ENCODE measurements at regions of chr6 and their contacts with region 1.

Region 1: GRCh38 chr6:30396833-30397479 is 52.0 kb downstream of the RPP21 start:
- DNase-seq: peak; percentile 83 to 89
- ATAC-seq: peak; percentile 92 to 100 (median 100)
- H3K4me3 ChIP-seq: no peak overlapping the region
- H3K4me3 Mint-ChIP-seq: no peak overlapping the region
- H3K27ac ChIP-seq: no peak overlapping the region
- H3K27ac Mint-ChIP-seq: no peak overlapping the region
- H3K4me1 ChIP-seq: peaks cover 7% of the 10 kb centered on the region
- H3K4me1 Mint-ChIP-seq: peaks cover 4 to 5% of the 10 kb centered on the region in 2 donors
- H3K27me3 ChIP-seq: peaks cover 11% of the 10 kb centered on the region
- H3K27me3 Mint-ChIP-seq: peaks cover 26 to 60% of the 10 kb centered on the region in 2 donors
- CTCF ChIP-seq: peak; percentile 85

Region 2: DNA sequence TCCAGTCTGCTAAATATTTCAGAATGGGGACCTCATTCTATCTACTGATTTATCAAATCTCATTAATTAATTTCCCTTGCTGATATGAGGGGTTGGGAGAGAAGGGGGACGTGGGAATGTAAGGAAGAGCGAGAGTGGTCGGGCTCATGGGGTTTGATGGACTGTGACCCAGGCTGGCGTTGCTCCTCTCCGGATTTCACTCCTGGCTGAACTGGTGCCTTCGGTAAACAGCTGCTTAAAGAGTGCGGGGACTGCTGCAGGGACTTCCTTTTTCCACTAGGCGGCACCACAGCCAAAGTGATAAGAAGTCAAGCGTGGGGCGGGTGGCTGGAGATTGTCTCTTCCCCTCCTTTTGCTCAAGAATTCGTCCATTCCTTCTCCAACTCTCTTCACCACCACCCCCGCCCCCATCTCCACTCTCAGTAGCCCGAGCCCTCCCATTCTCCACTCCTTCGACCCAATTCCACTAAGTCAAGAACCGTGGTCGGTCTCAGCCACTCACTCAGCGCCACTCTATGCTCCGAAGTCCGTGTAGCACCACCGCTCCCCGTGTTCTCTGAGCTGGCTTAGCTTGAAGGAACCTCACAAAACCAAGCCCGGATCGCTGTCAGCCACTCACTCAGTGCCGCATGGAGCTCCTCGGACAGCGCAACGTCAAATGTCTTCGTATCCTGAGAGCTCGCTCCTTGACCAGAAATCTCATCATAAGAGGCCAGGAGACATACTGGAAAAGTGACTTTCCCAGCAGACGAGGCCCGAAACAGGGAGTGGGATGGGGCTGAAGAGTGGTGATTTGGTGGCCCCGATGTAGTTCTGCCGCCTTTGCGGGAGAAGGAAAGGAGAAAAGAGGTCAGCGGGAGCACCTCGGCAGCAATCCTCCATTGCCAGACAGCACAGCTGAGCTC is 293.7 kb before region 1 on chr6:
- intact Hi-C with region 1: loop called (anchors 5 kb)
- DNase-seq: peak; percentile 72 to 92
- ATAC-seq: peak; percentile 89
- H3K4me3 ChIP-seq: peak overlapping the region; percentile 37
- H3K4me3 Mint-ChIP-seq: peak overlapping the region; percentile 73
- H3K27ac ChIP-seq: peak overlapping the region; percentile 11
- H3K27ac Mint-ChIP-seq: peak overlapping the region; percentile 71 to 80
- H3K4me1 ChIP-seq: peaks cover 38% of the 10 kb centered on the region
- H3K4me1 Mint-ChIP-seq: peaks cover 34 to 37% of the 10 kb centered on the region in 2 donors
- H3K27me3 ChIP-seq: peaks cover 34% of the 10 kb centered on the region
- H3K27me3 Mint-ChIP-seq: peaks cover 44 to 54% of the 10 kb centered on the region in 2 donors
- CTCF ChIP-seq: peak; percentile 84

Region 3: GRCh38 chr6:30219244-30219643 is 177.7 kb before region 1 on chr6:
- intact Hi-C with region 1: loop called (anchors 1 kb)
- DNase-seq: peak in 1 of 2 donors; percentile 81
- ATAC-seq: peak; percentile 68 to 72 (median 68)
- H3K4me3 ChIP-seq: no peak overlapping the region
- H3K4me3 Mint-ChIP-seq: no peak overlapping the region
- H3K27ac ChIP-seq: no peak overlapping the region
- H3K27ac Mint-ChIP-seq: no peak overlapping the region
- H3K4me1 ChIP-seq: peaks cover 10% of the 10 kb centered on the region
- H3K4me1 Mint-ChIP-seq: peaks cover 7 to 21% of the 10 kb centered on the region in 2 donors
- H3K27me3 ChIP-seq: no peaks in the 10 kb centered on the region
- H3K27me3 Mint-ChIP-seq: no peaks in the 10 kb centered on the region
- CTCF ChIP-seq: peak; percentile 72

Region 4: DNA sequence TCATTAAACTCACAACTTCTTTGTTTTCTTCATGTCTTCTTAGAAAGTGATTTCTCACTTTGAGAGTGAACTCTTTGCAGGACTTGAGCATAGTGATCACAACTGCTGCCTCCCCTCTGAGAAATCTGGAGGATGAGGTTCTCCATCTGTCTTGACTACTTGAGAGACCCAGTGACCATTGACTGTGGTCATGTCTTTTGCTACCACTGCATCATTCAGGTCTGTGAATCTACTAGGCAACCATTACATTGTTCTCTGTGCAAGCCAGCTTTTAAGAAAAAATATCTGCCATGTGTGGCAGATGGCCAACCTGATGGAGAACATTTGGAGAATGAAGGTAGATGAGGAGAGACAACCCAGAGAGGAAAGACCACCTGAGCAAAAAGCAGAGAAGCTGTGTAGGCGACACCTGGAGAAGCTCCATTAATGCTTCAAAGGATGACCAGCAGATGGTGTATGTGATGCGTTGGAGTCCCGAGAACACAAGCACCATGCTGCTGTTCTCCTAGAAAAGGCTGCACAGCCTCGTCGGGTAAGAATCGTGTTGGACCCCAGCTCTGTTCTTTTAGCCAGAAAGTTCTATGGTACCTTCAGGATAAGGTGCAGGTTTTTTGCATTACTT is 158.7 kb before region 1 on chr6:
- intact Hi-C with region 1: loop called (anchors 1 kb)
- DNase-seq: peak in 1 of 2 donors; percentile 69
- ATAC-seq: peak; percentile 43 to 64 (median 62)
- H3K4me3 ChIP-seq: no peak overlapping the region
- H3K4me3 Mint-ChIP-seq: no peak overlapping the region
- H3K27ac ChIP-seq: no peak overlapping the region
- H3K27ac Mint-ChIP-seq: no peak overlapping the region
- H3K4me1 ChIP-seq: no peaks in the 10 kb centered on the region
- H3K4me1 Mint-ChIP-seq: no peaks in the 10 kb centered on the region
- H3K27me3 ChIP-seq: no peaks in the 10 kb centered on the region
- H3K27me3 Mint-ChIP-seq: peaks cover under 1 to 16% of the 10 kb centered on the region in 2 donors
- CTCF ChIP-seq: peak; percentile 50

Region 5: DNA sequence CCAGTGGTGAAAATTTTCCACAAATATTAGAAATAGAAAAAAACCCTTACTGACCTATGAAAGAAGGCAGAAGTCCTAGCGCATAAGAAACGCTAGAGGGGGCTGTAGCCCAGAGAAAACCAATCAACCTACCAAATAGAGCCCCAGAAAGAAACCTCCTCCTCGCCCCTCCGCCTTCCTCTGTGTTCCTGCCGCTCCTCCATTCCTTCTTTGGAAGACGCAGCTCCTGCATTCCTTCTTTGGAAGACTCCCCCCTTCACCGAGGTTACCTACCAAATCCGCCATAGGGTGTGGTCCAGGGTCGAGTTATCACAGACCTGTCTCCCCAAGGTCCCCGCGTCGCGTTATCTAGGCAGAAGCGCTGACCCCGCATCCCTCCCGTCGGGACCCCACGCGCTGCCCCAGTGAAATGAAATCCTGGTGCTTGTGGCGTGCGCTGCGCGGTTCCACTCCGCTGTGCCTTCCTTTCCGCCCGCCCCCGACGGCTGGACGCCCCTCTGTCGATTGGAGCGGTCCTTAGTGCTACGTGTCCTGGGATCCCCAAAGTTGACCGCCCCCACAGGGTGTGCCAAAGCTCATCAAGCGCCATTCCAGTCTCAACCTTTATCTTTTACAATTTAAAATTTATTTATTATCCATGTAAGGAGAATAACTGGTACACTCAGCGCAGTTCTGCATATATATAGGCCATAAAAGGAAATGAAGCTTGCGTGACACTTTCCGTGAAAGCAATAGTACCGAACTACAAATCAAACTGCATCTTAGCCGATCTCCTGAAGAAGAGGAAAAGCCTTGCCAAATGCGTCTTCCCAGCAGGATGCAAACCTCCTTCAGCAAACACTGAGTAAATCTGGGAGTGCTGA is 39.0 kb before region 1 on chr6:
- intact Hi-C with region 1: loop called (anchors 1 kb)
- DNase-seq: peak; percentile 26 to 82
- ATAC-seq: peak; percentile 81 to 96 (median 92)
- H3K4me3 ChIP-seq: peak overlapping the region; percentile 8
- H3K4me3 Mint-ChIP-seq: peak overlapping the region; percentile 82
- H3K27ac ChIP-seq: no peak overlapping the region
- H3K27ac Mint-ChIP-seq: no peak overlapping the region
- H3K4me1 ChIP-seq: peaks cover 8% of the 10 kb centered on the region
- H3K4me1 Mint-ChIP-seq: peaks cover 6 to 9% of the 10 kb centered on the region in 2 donors
- H3K27me3 ChIP-seq: peaks cover 30% of the 10 kb centered on the region
- H3K27me3 Mint-ChIP-seq: peaks cover 56 to 66% of the 10 kb centered on the region in 2 donors
- CTCF ChIP-seq: peak; percentile 76